T-cell (primary cell): ENCODE measurements at regions of chr5 and their contacts with region 1.

Region 1: GRCh38 chr5:131436081-131436480 is 172.2 kb downstream of the CDC42SE2 start:
- DNase-seq: no peak
- ATAC-seq: no peak
- H3K4me3 ChIP-seq: no peak overlapping the region
- H3K4me3 Mint-ChIP-seq: no peak overlapping the region
- H3K27ac ChIP-seq: no peak overlapping the region
- H3K27ac Mint-ChIP-seq: peak overlapping the region; percentile 70 to 77
- H3K4me1 ChIP-seq: no peaks in the 10 kb centered on the region
- H3K4me1 Mint-ChIP-seq: peaks cover 5 to 12% (median 10%) of the 10 kb centered on the region in 3 donors
- H3K27me3 ChIP-seq: no peaks in the 10 kb centered on the region
- H3K27me3 Mint-ChIP-seq: no peaks in the 10 kb centered on the region

Region 2: DNA sequence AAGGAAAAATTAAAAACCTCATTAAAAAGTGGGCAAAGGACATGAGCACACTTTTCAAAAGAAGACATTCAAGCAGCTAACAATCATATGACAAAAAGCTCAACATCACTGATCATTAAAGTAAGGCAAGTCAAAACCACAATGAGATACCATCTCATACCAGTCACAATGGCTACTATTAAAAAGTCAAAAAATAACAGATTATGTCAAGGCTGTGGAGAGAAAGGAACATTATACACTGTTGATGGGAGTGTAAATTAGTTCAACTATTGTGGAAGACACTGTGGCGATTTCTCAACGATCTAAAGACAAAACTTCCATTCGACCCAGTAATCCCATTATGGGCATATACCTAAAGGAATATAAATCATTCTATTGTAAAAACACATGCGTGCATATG is 306.8 kb before region 1 on chr5:
- CTCF ChIA-PET with region 1: interaction called in 1 of 2 experiments, 14 read pairs
- POLR2A ChIA-PET with region 1: no interaction called
- DNase-seq: no peak
- ATAC-seq: no peak
- H3K4me3 ChIP-seq: no peak overlapping the region
- H3K4me3 Mint-ChIP-seq: no peak overlapping the region
- H3K27ac ChIP-seq: no peak overlapping the region
- H3K27ac Mint-ChIP-seq: no peak overlapping the region
- H3K4me1 ChIP-seq: no peaks in the 10 kb centered on the region
- H3K4me1 Mint-ChIP-seq: no peaks in the 10 kb centered on the region
- H3K27me3 ChIP-seq: peaks cover 0 to 3% of the 10 kb centered on the region in 2 experiments
- H3K27me3 Mint-ChIP-seq: peaks cover 0 to 3% of the 10 kb centered on the region in 2 donors

Region 3: GRCh38 chr5:131453826-131454225 is 17.7 kb after region 1 on chr5:
- CTCF ChIA-PET with region 1: no interaction called
- POLR2A ChIA-PET with region 1: no interaction called
- DNase-seq: no peak
- ATAC-seq: no peak
- H3K4me3 ChIP-seq: no peak overlapping the region
- H3K4me3 Mint-ChIP-seq: no peak overlapping the region
- H3K27ac ChIP-seq: no peak overlapping the region
- H3K27ac Mint-ChIP-seq: peak overlapping the region; percentile 33 to 71
- H3K4me1 ChIP-seq: no peaks in the 10 kb centered on the region
- H3K4me1 Mint-ChIP-seq: peaks cover 29 to 40% (median 34%) of the 10 kb centered on the region in 3 donors
- H3K27me3 ChIP-seq: no peaks in the 10 kb centered on the region
- H3K27me3 Mint-ChIP-seq: no peaks in the 10 kb centered on the region

Region 4: GRCh38 chr5:131767891-131768290 is 331.8 kb after region 1 on chr5:
- CTCF ChIA-PET with region 1: interaction called in 1 of 2 experiments, 10 read pairs
- POLR2A ChIA-PET with region 1: no interaction called
- DNase-seq: no peak
- ATAC-seq: no peak
- H3K4me3 ChIP-seq: no peak overlapping the region
- H3K4me3 Mint-ChIP-seq: no peak overlapping the region
- H3K27ac ChIP-seq: no peak overlapping the region
- H3K27ac Mint-ChIP-seq: no peak overlapping the region
- H3K4me1 ChIP-seq: no peaks in the 10 kb centered on the region
- H3K4me1 Mint-ChIP-seq: peaks cover 17 to 33% (median 27%) of the 10 kb centered on the region in 3 donors
- H3K27me3 ChIP-seq: no peaks in the 10 kb centered on the region
- H3K27me3 Mint-ChIP-seq: no peaks in the 10 kb centered on the region